K562 (cell line): ENCODE measurements at regions of chr11 and their contacts with region 1.

Region 1: GRCh38 chr11:72024069-72024754 is 25.5 kb downstream of the IL18BP start:
- DNase-seq: no peak
- ATAC-seq: no peak
- H3K4me3 ChIP-seq: no peak overlapping the region
- H3K27ac ChIP-seq: no peak overlapping the region; the same call in 2 of the 3 replicates
- H3K4me1 ChIP-seq: no peaks in the 10 kb centered on the region
- H3K27me3 ChIP-seq: no peaks in the 10 kb centered on the region
- CTCF ChIP-seq: no peak
- EP300 ChIP-seq: no peak
- POLR2A ChIP-seq: no peak
- RAD21 ChIP-seq: no peak

Region 2: GRCh38 chr11:72144807-72145560 is 120.8 kb after region 1 on chr11:
- CTCF ChIA-PET with region 1: interaction called, 8 read pairs
- POLR2A ChIA-PET with region 1: interaction called, 7 read pairs
- in situ Hi-C with region 1: loop called (anchors 5 kb)
- intact Hi-C with region 1: loop called (anchors 2 kb)
- DNase-seq: no peak
- ATAC-seq: no peak
- H3K4me3 ChIP-seq: no peak overlapping the region
- H3K27ac ChIP-seq: no peak overlapping the region
- H3K4me1 ChIP-seq: peaks cover 0 to 3% of the 10 kb centered on the region in 2 experiments; a peak in 1 of 5 replicates
- H3K27me3 ChIP-seq: no peaks in the 10 kb centered on the region
- CTCF ChIP-seq: no peak
- EP300 ChIP-seq: no peak
- POLR2A ChIP-seq: no peak
- RAD21 ChIP-seq: no peak

Region 3: GRCh38 chr11:72154816-72155215 is 130.6 kb after region 1 on chr11:
- CTCF ChIA-PET with region 1: no interaction called
- POLR2A ChIA-PET with region 1: interaction called, 4 read pairs
- in situ Hi-C with region 1: loop called (anchors 5 kb)
- intact Hi-C with region 1: no loop called
- DNase-seq: peak in 1 of 4 experiments; percentile 16
- ATAC-seq: peak; percentile 72
- H3K4me3 ChIP-seq: no peak overlapping the region
- H3K27ac ChIP-seq: no peak overlapping the region; the same call in 2 of the 3 replicates
- H3K4me1 ChIP-seq: peaks cover 3 to 22% of the 10 kb centered on the region in 2 experiments; a peak in 4 of 5 replicates
- H3K27me3 ChIP-seq: no peaks in the 10 kb centered on the region; a peak in 1 of 5 replicates
- CTCF ChIP-seq: no peak
- EP300 ChIP-seq: peak; percentile 49; the same call in 1 of the 2 replicates
- POLR2A ChIP-seq: no peak
- RAD21 ChIP-seq: no peak

Region 4: DNA sequence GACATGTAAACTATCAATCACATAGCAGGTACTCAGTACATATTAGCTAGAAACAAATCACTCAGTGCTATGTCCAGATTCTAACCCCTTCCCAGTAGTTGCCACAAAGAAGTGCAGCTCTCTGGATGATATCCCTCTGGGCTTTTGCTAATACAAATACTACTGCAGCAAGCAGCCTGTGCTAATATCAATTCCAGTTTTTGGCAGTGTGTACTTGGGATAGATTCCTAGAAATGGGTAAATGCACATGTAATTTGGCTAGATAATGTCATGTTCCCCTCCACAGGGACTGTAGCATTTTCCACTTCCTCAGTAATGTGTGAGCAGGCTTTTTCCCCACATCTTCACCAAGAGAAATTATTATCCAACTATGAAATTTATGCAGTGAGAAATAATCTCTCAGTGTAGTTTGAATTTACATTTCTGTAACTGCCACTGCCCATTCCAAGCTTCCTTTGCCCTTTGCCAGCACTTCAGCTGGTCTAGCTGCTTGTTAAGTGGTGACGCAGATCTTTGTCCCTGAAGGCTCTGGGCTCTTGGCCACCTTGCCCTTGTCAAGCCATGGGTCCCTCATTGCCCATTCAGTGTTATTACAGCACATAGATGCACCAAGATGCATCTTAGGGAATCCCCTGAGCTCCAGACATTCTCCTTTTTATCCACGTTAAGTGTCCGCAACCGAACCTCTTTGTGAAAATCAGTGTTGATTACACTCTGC is 517.2 kb after region 1 on chr11:
- CTCF ChIA-PET with region 1: no interaction called
- POLR2A ChIA-PET with region 1: no interaction called
- in situ Hi-C with region 1: no loop called
- intact Hi-C with region 1: no loop called
- DNase-seq: no peak
- ATAC-seq: no peak
- H3K4me3 ChIP-seq: no peak overlapping the region
- H3K27ac ChIP-seq: no peak overlapping the region
- H3K4me1 ChIP-seq: no peaks in the 10 kb centered on the region
- H3K27me3 ChIP-seq: peaks cover 20 to 51% of the 10 kb centered on the region in 2 experiments; a peak in 4 of 5 replicates
- CTCF ChIP-seq: no peak
- EP300 ChIP-seq: no peak
- POLR2A ChIP-seq: no peak
- RAD21 ChIP-seq: no peak